ENCODE measurements at regions of chr19 and their contacts with region 1.

Region 1: DNA sequence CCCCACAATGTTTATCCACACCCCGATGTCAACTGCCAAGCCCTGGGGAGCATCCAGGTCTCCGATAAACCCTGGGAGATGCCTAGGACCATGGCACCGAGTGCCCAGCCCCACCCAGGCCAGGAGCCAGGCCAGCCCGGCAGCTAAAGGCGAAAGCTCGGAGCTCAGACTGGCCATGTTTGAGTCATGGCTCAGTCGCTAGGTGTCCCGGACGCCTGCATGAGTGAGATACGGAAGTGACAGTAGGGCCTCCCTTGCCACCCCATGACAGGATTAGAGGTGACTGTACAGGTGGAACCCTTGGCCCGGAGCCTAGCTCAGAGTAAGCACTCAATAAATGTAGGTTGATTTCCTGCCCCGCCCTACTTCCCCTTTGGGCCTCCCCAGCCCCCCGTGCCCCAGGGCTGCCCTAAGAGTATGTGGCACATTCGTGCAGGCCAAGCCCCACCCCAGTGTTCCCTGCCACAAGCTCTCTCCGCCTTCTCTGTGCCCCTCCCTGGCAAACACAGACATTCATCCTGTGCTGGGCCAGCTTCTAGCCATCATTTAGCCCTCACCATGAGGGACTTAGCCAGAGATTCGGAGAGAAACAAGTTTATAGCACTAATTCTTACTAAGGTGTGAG is 5.8 kb upstream of the TPM4 start:
- DNase-seq: peak; percentile 64
- ATAC-seq: peak; percentile 93
- H3K4me3 Mint-ChIP-seq: peak overlapping the region; percentile 67
- H3K27ac Mint-ChIP-seq: no peak overlapping the region
- H3K4me1 Mint-ChIP-seq: peaks cover 16% of the 10 kb centered on the region
- H3K27me3 Mint-ChIP-seq: no peaks in the 10 kb centered on the region
- CTCF ChIP-seq: no peak

Region 2: DNA sequence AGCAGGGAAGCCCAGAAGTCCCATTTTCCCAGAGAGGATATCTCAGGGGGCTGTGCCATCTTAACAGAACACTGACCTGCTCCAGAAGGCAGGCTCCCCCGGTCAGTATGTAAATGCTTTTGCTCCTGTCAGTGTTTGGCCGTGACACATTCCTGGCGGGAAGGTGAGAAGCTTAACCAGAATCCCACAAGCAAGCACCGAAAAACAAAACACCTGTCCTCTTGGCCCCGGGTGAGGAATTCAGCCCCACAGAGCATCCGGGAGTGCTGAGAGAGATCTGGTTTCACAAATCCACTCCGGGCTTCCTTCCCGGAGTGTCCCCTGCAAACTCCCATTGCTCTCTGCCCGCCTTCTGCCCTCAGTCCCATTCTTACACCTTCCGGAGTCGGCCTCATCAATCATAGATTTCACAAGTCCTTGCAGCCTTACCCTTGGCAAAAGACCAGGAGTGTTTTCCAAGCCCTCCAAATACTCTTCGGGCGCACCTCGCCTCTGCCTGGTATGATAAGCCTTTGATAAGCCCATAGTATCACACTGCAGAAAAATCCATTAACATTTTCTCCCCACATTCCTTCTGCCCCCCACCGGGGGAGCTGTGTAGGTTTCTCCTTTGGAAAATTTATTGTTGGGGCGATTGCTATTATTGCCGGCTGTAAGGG is 18.0 kb after region 1 on chr19:
- CTCF ChIA-PET with region 1: interaction called, 7 read pairs
- POLR2A ChIA-PET with region 1: interaction called, 45 read pairs
- intact Hi-C with region 1: no loop called
- DNase-seq: no peak
- ATAC-seq: no peak
- H3K4me3 Mint-ChIP-seq: no peak overlapping the region
- H3K27ac Mint-ChIP-seq: no peak overlapping the region
- H3K4me1 Mint-ChIP-seq: peaks cover 22% of the 10 kb centered on the region
- H3K27me3 Mint-ChIP-seq: no peaks in the 10 kb centered on the region
- CTCF ChIP-seq: no peak

Region 3: DNA sequence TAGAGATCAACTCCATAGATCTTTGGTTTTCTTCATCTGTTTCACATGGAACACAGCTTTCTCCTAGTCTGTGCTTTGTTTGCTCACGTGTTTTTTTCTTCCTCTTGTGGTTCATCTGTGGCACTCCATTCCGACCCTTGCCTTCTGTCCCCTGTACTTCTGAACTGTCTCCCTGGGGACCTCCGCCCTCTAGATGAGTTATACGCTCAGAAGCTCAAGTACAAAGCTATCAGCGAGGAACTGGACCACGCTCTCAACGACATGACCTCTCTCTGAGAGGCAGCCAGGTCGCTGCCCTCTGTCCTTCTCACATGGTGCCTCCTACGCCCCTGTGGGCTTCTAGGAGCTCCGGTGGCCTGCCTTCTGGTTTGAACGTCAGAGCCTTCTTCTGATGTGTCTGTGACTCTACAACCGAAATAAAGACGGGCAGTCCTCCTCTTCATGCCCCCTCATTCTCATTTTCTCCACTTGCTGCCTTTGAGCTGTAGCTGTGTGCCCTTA is 24.6 kb after region 1 on chr19:
- CTCF ChIA-PET with region 1: interaction called, 3 read pairs
- POLR2A ChIA-PET with region 1: interaction called, 24 read pairs
- intact Hi-C with region 1: no loop called
- DNase-seq: no peak
- ATAC-seq: peak; percentile 81
- H3K4me3 Mint-ChIP-seq: no peak overlapping the region
- H3K27ac Mint-ChIP-seq: peak overlapping the region; percentile 57
- H3K4me1 Mint-ChIP-seq: peaks cover 13% of the 10 kb centered on the region
- H3K27me3 Mint-ChIP-seq: no peaks in the 10 kb centered on the region
- CTCF ChIP-seq: no peak

Region 4: GRCh38 chr19:16106121-16106520 is 35.6 kb after region 1 on chr19:
- CTCF ChIA-PET with region 1: interaction called, 3 read pairs
- POLR2A ChIA-PET with region 1: interaction called, 61 read pairs
- intact Hi-C with region 1: loop called (anchors 1 kb)
- DNase-seq: no peak
- ATAC-seq: no peak
- H3K4me3 Mint-ChIP-seq: no peak overlapping the region
- H3K27ac Mint-ChIP-seq: peak overlapping the region; percentile 77
- H3K4me1 Mint-ChIP-seq: peaks cover 31% of the 10 kb centered on the region
- H3K27me3 Mint-ChIP-seq: no peaks in the 10 kb centered on the region
- CTCF ChIP-seq: no peak

Region 5: GRCh38 chr19:16118489-16119033 is 48.1 kb after region 1 on chr19:
- CTCF ChIA-PET with region 1: interaction called, 10 read pairs
- POLR2A ChIA-PET with region 1: interaction called, 88 read pairs
- intact Hi-C with region 1: no loop called
- DNase-seq: peak; percentile 76
- ATAC-seq: peak; percentile 87
- H3K4me3 Mint-ChIP-seq: peak overlapping the region; percentile 73
- H3K27ac Mint-ChIP-seq: peak overlapping the region; percentile 98
- H3K4me1 Mint-ChIP-seq: peaks cover 80% of the 10 kb centered on the region
- H3K27me3 Mint-ChIP-seq: no peaks in the 10 kb centered on the region
- CTCF ChIP-seq: no peak

Measured in activated B cell treated with CpG ODN at 0.5 μM for 24 hours (primary cell).